Caco-2 (cell line): ENCODE measurements at regions of chr17 and their contacts with region 1.

Region 1: GRCh38 chr17:1908699-1909309 is 79.0 kb downstream of the RPA1 start:
- DNase-seq: peak; percentile 75 to 81
- H3K4me3 ChIP-seq: no peak overlapping the region
- H3K4me3 Mint-ChIP-seq: no peak overlapping the region
- H3K27ac Mint-ChIP-seq: no peak overlapping the region
- H3K4me1 ChIP-seq: peaks cover 17% of the 10 kb centered on the region
- H3K4me1 Mint-ChIP-seq: peaks cover 6% of the 10 kb centered on the region
- H3K27me3 ChIP-seq: no peaks in the 10 kb centered on the region
- H3K27me3 Mint-ChIP-seq: no peaks in the 10 kb centered on the region
- CTCF ChIP-seq: peak; percentile 83 to 88

Region 2: DNA sequence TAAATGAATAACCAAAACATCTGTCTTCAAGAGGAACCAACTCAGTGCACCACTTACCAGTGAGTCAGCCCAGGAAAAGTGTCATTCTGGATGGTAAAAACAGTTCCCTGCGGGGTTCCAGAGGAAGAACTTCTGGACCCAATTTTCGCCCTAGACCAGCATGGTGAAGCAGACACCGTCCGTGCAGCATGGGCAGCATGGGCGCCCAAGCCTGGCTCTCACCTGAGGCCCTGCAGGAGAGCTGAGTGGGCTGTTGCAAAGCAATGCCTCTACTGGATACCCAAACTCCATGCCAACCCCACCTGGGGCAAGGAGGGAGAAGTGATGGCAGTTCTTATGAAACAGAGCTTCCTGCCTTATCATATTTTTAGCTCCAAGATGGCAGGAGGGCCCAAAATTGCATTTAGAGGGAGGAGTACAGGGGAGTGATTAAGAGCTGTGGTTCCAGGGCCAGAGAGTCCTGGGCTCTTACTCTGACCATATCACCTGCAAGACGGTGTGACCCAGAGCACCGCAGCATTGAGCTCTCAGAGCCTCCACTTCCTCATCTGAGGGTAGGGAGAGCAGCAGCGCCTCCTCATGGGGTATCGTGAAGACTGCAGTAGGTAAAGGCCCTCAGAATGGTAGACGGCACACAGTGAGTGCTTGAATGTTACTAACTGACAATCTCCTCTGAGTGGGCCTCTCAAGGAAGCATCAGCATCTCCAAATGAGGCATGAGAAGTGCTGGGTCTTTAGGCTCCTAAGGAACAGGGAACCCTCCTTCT is 375.8 kb before region 1 on chr17:
- CTCF ChIA-PET with region 1: no interaction called
- POLR2A ChIA-PET with region 1: no interaction called
- intact Hi-C with region 1: no loop called
- DNase-seq: peak in 1 of 2 experiments; percentile 35
- H3K4me3 ChIP-seq: no peak overlapping the region
- H3K4me3 Mint-ChIP-seq: no peak overlapping the region
- H3K27ac Mint-ChIP-seq: no peak overlapping the region
- H3K4me1 ChIP-seq: no peaks in the 10 kb centered on the region
- H3K4me1 Mint-ChIP-seq: peaks cover 6% of the 10 kb centered on the region
- H3K27me3 ChIP-seq: no peaks in the 10 kb centered on the region
- H3K27me3 Mint-ChIP-seq: no peaks in the 10 kb centered on the region
- CTCF ChIP-seq: peak; percentile 26 to 40

Region 3: GRCh38 chr17:1847191-1847590 is 61.6 kb before region 1 on chr17:
- CTCF ChIA-PET with region 1: no interaction called
- POLR2A ChIA-PET with region 1: no interaction called
- intact Hi-C with region 1: no loop called
- DNase-seq: no peak
- H3K4me3 ChIP-seq: no peak overlapping the region
- H3K4me3 Mint-ChIP-seq: no peak overlapping the region
- H3K27ac Mint-ChIP-seq: no peak overlapping the region
- H3K4me1 ChIP-seq: no peaks in the 10 kb centered on the region
- H3K4me1 Mint-ChIP-seq: peaks cover 6% of the 10 kb centered on the region
- H3K27me3 ChIP-seq: no peaks in the 10 kb centered on the region
- H3K27me3 Mint-ChIP-seq: no peaks in the 10 kb centered on the region
- CTCF ChIP-seq: no peak

Region 4: GRCh38 chr17:1920948-1921351 is 12.1 kb after region 1 on chr17:
- CTCF ChIA-PET with region 1: interaction called, 13 read pairs
- POLR2A ChIA-PET with region 1: no interaction called
- intact Hi-C with region 1: no loop called
- DNase-seq: no peak
- H3K4me3 ChIP-seq: no peak overlapping the region
- H3K4me3 Mint-ChIP-seq: no peak overlapping the region
- H3K27ac Mint-ChIP-seq: no peak overlapping the region
- H3K4me1 ChIP-seq: no peaks in the 10 kb centered on the region
- H3K4me1 Mint-ChIP-seq: no peaks in the 10 kb centered on the region
- H3K27me3 ChIP-seq: no peaks in the 10 kb centered on the region
- H3K27me3 Mint-ChIP-seq: no peaks in the 10 kb centered on the region
- CTCF ChIP-seq: no peak

Region 5: DNA sequence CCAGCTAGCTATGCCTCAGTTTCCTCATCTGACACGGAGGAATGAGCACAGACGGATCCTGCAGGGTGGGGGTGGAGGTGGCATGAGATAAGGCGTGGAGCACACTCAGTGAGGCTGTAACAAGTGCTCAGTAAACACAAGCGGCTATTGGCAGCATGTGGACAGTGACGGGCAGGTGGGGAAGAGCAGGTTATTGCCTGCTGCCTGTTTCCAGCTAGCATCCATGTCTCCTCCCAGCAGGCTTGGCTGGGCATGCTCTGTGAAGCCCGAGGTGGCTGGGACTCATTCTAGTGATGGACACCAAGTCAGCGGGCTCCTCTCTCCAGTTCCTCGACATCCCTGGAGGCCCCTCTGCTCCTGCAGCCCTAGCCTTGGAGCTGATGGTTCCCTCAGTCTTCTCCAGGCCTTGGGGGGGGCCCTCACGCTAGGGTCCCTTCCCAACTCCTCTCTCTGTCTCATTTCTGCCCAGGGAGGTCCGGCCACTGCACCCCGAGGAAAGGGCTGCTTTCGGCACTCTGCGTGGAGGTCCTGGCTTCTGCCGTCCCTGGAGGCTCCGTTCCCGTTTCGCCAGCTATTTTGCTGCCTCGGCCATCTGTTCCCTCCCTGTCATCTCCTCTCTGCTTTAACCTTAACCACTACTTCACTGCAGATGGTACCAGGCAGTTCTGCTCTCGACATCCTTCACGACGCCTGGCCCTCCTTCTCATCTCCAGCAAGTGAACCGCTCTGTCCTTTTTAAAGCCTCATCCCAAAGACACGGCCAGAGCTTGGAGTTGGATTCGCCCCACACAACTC is 110.1 kb after region 1 on chr17:
- CTCF ChIA-PET with region 1: interaction called, 185 read pairs
- POLR2A ChIA-PET with region 1: no interaction called
- intact Hi-C with region 1: no loop called
- DNase-seq: no peak
- H3K4me3 ChIP-seq: no peak overlapping the region
- H3K4me3 Mint-ChIP-seq: no peak overlapping the region
- H3K27ac Mint-ChIP-seq: no peak overlapping the region
- H3K4me1 ChIP-seq: peaks cover 3% of the 10 kb centered on the region; the same call in 1 of the 2 replicates
- H3K4me1 Mint-ChIP-seq: no peaks in the 10 kb centered on the region
- H3K27me3 ChIP-seq: peaks cover 2% of the 10 kb centered on the region; the same call in 1 of the 2 replicates
- H3K27me3 Mint-ChIP-seq: peaks cover 13% of the 10 kb centered on the region
- CTCF ChIP-seq: no peak